ENCODE measurements at regions of chr9 and their contacts with region 1.

Region 1: GRCh38 chr9:5437254-5438216 is at the start of gene PLGRKT:
- DNase-seq: peak; percentile 87
- ATAC-seq: peak; percentile 98
- H3K4me3 ChIP-seq: peak within 1 kb of the TSS; percentile 75
- H3K27ac ChIP-seq: peak within 1 kb of the TSS; percentile 70
- H3K4me1 ChIP-seq: peaks cover 5% of the 10 kb centered on the region
- H3K27me3 ChIP-seq: no peaks in the 10 kb centered on the region
- CTCF ChIP-seq: peak; percentile 29; the same call in 1 of the 2 replicates
- POLR2A ChIP-seq: peak; percentile 81
- RAD21 ChIP-seq: peak; percentile 27
- total RNA-seq, gene PLGRKT: 12.7 and 13.6 TPM in 2 replicates

Region 2: GRCh38 chr9:5186416-5187169 is 250.9 kb before region 1 on chr9:
- CTCF ChIA-PET with region 1: interaction called, 4 read pairs
- POLR2A ChIA-PET with region 1: no interaction called
- dilution Hi-C with region 1: no loop called
- in situ Hi-C with region 1: loop called (anchors 5 kb)
- intact Hi-C with region 1: loop called (anchors 1 kb)
- DNase-seq: peak; percentile 73
- ATAC-seq: peak; percentile 83
- H3K4me3 ChIP-seq: no peak overlapping the region
- H3K27ac ChIP-seq: no peak overlapping the region
- H3K4me1 ChIP-seq: no peaks in the 10 kb centered on the region
- H3K27me3 ChIP-seq: peaks cover 8% of the 10 kb centered on the region
- CTCF ChIP-seq: peak; percentile 82
- POLR2A ChIP-seq: no peak
- RAD21 ChIP-seq: peak; percentile 93

Region 3: GRCh38 chr9:5510360-5510931 is 72.9 kb after region 1 on chr9 and contains the start of gene PDCD1LG2:
- CTCF ChIA-PET with region 1: no interaction called
- POLR2A ChIA-PET with region 1: no interaction called
- dilution Hi-C with region 1: no loop called
- in situ Hi-C with region 1: no loop called
- intact Hi-C with region 1: no loop called
- DNase-seq: peak; percentile 84
- ATAC-seq: peak; percentile 55
- H3K4me3 ChIP-seq: peak within 1 kb of the TSS; percentile 52
- H3K27ac ChIP-seq: peak within 1 kb of the TSS; percentile 94
- H3K4me1 ChIP-seq: peaks cover 22% of the 10 kb centered on the region
- H3K27me3 ChIP-seq: no peaks in the 10 kb centered on the region
- CTCF ChIP-seq: no peak
- POLR2A ChIP-seq: peak; percentile 55
- RAD21 ChIP-seq: no peak
- total RNA-seq, gene PDCD1LG2: 29.7 and 33.3 TPM in 2 replicates

Measured in IMR-90 (cell line).